Activated naive CD4-positive, alpha-beta T cell treated with anti-CD3 and anti-CD28 coated beads for 36 hours (primary cell): ENCODE measurements at regions of chr6 and their contacts with region 1.

Region 1: DNA sequence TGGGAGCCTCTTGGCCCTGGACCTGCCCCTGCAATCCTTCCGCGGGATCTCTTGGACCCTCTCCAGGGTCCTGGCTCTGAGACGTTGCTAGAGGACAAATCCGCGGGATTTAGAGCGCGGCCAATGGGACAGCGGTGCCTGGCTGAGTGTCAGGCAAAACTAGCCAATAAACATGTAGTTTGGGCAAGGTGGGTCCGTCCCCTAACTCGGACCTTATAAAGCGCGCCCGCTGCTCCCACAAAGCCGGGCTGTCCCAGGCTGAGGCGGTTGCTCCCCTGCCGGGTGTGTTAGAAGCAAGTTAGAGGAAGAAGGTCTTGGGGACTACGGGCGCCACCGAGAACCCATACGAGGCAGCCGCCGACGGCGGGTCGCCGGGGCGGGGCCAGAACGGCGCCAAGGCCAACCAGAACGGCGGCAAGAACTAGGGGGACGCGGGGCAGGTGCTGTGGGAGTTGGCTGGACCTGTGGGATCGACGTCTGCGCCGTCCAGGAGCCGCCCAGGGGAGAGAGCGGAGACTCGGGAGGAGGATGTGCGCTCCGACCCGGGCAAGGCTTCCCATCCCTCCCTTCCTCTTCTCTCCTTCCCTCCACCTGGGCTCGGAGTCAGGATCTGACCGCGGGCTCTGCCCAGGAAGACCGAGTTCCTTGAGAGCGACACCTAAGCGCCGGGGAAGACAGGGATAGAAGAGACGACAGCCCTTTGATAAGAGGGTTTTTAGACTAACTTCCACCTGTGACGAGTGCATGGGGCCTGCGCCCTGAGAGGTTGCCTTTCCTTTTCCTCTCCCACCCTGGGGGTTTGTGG is 6.5 kb upstream of the TMEM14A start:
- DNase-seq: peak; percentile 86
- H3K4me3 Mint-ChIP-seq: no peak overlapping the region
- H3K27ac Mint-ChIP-seq: no peak overlapping the region
- H3K4me1 Mint-ChIP-seq: peaks cover 3% of the 10 kb centered on the region
- H3K27me3 Mint-ChIP-seq: no peaks in the 10 kb centered on the region

Region 2: DNA sequence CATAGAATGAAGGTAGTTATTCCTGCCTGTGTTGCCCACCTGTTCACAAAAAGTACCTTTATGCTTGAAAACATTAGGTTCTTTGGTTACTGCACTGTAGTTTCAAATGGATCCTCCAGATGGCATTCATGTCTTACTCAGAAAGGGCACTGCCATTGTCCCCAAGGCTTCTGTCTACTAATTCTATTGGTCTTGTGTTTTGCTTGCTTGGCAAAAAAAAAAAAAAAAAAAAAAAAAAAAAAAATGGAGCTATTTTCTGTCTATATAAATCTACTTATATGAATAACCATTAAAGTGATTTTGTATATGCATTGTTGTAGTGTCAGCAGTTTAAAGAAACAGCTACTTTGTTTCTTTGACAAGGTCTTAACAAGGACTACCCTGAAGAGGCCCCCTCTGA is 256.9 kb before region 1 on chr6:
- CTCF ChIA-PET with region 1: interaction called, 21 read pairs
- intact Hi-C with region 1: loop called (anchors 1 kb)
- DNase-seq: no peak
- H3K4me3 Mint-ChIP-seq: no peak overlapping the region
- H3K27ac Mint-ChIP-seq: no peak overlapping the region
- H3K4me1 Mint-ChIP-seq: peaks cover 26% of the 10 kb centered on the region
- H3K27me3 Mint-ChIP-seq: no peaks in the 10 kb centered on the region

Region 3: GRCh38 chr6:52495922-52496321 is 168.5 kb before region 1 on chr6:
- CTCF ChIA-PET with region 1: no interaction called
- intact Hi-C with region 1: loop called (anchors 1 kb)
- DNase-seq: no peak
- H3K4me3 Mint-ChIP-seq: no peak overlapping the region
- H3K27ac Mint-ChIP-seq: no peak overlapping the region
- H3K4me1 Mint-ChIP-seq: no peaks in the 10 kb centered on the region
- H3K27me3 Mint-ChIP-seq: no peaks in the 10 kb centered on the region

Region 4: DNA sequence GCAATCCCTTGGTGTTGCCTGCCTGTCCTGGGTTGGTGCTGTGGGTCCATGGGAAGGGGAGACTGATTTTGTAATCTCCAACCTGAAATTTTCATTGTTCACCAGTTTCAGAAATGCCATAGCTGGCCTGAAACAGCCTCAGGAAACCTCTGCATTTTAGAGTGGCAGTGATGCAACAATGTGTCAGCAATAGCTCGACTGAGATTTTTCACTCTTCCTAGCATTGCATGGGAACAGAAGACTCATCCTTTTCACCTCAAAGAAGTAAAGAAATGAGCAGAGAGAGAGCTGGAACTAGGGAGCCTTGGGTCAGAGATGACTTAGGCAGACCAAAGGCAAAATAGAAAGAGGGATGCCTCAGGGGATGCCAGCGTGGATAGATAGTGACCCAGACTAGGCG is 17.2 kb before region 1 on chr6:
- CTCF ChIA-PET with region 1: interaction called, 81 read pairs
- intact Hi-C with region 1: loop called (anchors 1 kb)
- DNase-seq: no peak
- H3K4me3 Mint-ChIP-seq: no peak overlapping the region
- H3K27ac Mint-ChIP-seq: no peak overlapping the region
- H3K4me1 Mint-ChIP-seq: peaks cover 13% of the 10 kb centered on the region
- H3K27me3 Mint-ChIP-seq: no peaks in the 10 kb centered on the region

Region 5: GRCh38 chr6:53064726-53065215 is 400.4 kb after region 1 on chr6:
- CTCF ChIA-PET with region 1: no interaction called
- intact Hi-C with region 1: loop called (anchors 2 kb)
- DNase-seq: peak; percentile 99
- H3K4me3 Mint-ChIP-seq: peak overlapping the region; percentile 97
- H3K27ac Mint-ChIP-seq: peak overlapping the region; percentile 99
- H3K4me1 Mint-ChIP-seq: peaks cover 55% of the 10 kb centered on the region
- H3K27me3 Mint-ChIP-seq: no peaks in the 10 kb centered on the region